Activated CD4-positive, alpha-beta T cell treated with anti-CD3 and anti-CD28 coated beads for 36 hours (primary cell): ENCODE measurements at regions of chr11 and their contacts with region 1.

Region 1: DNA sequence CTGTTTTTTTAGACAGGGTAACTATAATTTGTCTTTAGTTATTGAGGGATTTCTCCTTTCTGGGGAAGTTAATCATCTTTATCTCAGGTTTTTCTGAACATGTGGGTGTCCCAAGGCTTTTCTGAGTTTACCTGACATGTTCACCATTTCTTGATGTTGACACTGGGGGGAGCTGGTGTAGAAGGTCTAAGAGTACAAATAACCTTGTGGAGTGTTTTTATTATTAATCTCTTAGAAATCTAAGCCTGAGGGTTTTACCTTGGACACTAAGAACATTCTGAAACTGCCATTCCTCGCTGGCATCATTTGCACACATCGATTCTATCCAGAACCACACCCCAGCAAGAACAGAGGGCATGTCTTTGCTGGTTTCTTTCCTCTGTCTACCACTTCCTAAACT is 15.6 kb upstream of the C11orf91 start:
- DNase-seq: no peak
- ATAC-seq: peak; percentile 75
- H3K4me3 Mint-ChIP-seq: no peak overlapping the region
- H3K27ac Mint-ChIP-seq: no peak overlapping the region
- H3K4me1 Mint-ChIP-seq: peaks cover under 1% of the 10 kb centered on the region
- H3K27me3 Mint-ChIP-seq: no peaks in the 10 kb centered on the region

Region 2: DNA sequence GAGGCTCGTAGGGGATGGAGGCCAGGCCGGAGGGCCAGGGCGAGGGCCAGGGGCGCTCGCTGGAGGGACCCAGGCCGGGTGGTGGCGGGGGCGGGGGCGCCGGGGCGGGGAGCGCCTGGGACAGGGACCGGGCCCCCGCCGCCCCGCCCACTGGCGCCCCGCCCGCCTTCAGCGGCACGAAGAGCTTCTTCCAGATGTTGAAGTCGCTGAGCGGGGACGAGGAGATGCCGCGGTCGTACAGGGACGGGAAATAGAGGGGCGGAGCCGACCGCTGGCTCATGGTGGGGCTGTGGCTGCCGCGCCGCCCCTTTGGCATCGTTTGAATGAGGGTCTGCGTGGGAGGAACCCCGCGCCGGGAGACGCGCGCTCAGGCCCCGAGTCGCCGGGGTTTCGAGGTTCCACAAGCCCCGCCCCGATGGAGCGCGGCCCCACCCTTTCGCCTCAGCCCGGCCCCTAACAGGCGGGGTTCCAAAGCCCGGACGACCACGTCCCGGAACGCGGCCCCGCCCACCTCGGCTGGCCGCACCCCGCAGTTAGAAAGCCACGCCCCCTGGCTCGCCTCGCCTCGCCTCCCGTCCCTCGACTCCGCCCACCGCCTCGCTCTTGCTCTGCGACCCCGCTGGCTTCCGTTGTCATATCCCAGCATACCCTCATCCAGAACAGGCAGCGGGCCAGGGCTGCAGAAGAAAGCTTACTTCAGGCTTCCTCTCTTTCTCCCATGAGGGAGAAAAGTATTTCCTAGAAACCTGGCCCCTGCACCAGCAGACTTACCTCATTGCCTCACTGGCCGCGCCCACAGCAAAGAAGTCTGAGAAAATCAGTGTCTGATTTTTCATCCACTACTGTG is 15.6 kb before region 1 on chr11 and contains the start of gene C11orf91:
- CTCF ChIA-PET with region 1: interaction called, 16 read pairs
- POLR2A ChIA-PET with region 1: no interaction called
- intact Hi-C with region 1: no loop called
- DNase-seq: peak; percentile 94
- ATAC-seq: peak; percentile 93
- H3K4me3 Mint-ChIP-seq: peak within 1 kb of the TSS; percentile 74
- H3K27ac Mint-ChIP-seq: peak within 1 kb of the TSS; percentile 45
- H3K4me1 Mint-ChIP-seq: peaks cover 18% of the 10 kb centered on the region
- H3K27me3 Mint-ChIP-seq: peaks cover 16% of the 10 kb centered on the region
- total RNA-seq, gene C11orf91: not detected

Region 3: DNA sequence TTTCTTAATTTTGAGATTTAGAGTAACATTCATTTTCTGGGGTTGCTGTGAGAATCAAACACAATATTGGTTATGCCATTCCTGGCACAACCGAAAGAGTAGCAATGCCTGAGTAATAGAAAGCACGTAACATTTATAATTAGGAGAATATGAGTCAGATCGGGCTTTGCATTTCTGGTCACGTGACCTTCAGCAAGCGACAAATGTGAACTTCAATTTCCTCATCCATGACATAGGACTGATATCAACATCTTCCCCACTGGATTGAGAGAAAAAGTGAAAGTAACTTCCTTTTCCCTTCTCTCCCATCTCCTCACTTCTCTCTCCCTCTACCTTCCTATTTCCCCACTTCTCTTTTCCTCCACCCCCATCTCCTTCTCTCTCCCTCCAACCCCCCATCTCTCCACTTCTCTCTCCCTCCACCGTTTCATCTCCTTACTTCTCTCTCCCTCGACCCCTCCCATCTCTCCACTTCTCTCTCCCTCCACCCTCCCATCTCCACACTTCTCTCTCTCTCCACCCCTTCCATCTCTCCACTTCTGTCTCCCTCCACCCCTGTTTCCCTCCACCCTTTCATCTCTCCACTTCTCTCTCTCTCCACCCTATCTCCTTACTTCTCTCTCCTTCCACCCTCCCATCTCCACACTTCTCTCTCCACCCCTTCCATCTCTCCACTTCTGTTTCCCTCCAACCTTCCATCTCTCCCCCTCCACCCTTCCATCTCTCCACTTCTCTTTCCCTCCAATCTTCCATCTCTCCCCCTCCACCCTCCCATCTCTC is 689.0 kb after region 1 on chr11:
- CTCF ChIA-PET with region 1: no interaction called
- POLR2A ChIA-PET with region 1: no interaction called
- intact Hi-C with region 1: no loop called
- DNase-seq: peak; percentile 7
- ATAC-seq: peak; percentile 88
- H3K4me3 Mint-ChIP-seq: no peak overlapping the region
- H3K27ac Mint-ChIP-seq: peak overlapping the region; percentile 33
- H3K4me1 Mint-ChIP-seq: peaks cover 17% of the 10 kb centered on the region
- H3K27me3 Mint-ChIP-seq: peaks cover 17% of the 10 kb centered on the region